Activated CD4-positive, alpha-beta memory T cell treated with anti-CD3 and anti-CD28 coated beads for 36 hours (primary cell): ENCODE measurements at regions of chr2 and their contacts with region 1.

Region 1: DNA sequence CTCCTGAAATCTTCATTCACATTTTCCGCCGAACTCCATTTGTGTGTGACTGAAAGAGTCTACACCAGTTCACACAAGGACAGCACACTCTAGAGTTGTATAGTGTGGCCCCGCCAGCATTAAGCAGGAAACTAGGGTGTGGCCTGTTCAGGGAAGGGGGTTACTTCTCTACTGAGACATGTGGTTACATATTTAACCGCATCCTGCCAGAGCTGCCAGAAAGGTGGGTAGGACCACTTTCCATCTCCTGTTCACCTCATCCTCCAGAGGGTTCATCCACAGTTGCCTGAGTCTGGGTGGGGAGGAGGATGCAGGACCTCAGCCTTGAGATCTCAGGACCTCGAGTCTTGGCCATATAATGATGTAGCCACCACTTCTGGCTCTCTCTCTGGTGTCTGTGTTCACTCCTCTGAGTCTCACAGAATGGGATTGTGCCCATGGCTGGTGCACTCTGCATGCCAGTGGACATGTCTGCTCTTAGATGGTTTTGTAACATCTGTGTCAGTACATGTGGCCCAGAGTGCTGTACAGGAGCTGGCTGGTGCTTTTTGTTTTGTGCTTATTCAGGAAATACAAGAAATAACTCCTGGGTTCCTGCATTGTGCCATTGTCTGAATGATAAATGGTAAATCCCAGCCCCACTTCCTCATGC is 7.7 kb upstream of the SP140L start:
- DNase-seq: peak; percentile 83
- H3K4me3 Mint-ChIP-seq: peak overlapping the region; percentile 6
- H3K27ac Mint-ChIP-seq: peak overlapping the region; percentile 80
- H3K4me1 Mint-ChIP-seq: peaks cover 60% of the 10 kb centered on the region
- H3K27me3 Mint-ChIP-seq: no peaks in the 10 kb centered on the region

Region 2: GRCh38 chr2:230219419-230220331 is 99.7 kb before region 1 on chr2 and contains the start of gene SP110:
- CTCF ChIA-PET with region 1: no interaction called
- POLR2A ChIA-PET with region 1: no interaction called
- intact Hi-C with region 1: loop called (anchors 2 kb)
- DNase-seq: peak; percentile 90
- H3K4me3 Mint-ChIP-seq: peak within 1 kb of the TSS; percentile 92
- H3K27ac Mint-ChIP-seq: peak within 1 kb of the TSS; percentile 90
- H3K4me1 Mint-ChIP-seq: peaks cover 69% of the 10 kb centered on the region
- H3K27me3 Mint-ChIP-seq: no peaks in the 10 kb centered on the region
- total RNA-seq, gene SP110: 91.5 to 94.1 TPM

Region 3: DNA sequence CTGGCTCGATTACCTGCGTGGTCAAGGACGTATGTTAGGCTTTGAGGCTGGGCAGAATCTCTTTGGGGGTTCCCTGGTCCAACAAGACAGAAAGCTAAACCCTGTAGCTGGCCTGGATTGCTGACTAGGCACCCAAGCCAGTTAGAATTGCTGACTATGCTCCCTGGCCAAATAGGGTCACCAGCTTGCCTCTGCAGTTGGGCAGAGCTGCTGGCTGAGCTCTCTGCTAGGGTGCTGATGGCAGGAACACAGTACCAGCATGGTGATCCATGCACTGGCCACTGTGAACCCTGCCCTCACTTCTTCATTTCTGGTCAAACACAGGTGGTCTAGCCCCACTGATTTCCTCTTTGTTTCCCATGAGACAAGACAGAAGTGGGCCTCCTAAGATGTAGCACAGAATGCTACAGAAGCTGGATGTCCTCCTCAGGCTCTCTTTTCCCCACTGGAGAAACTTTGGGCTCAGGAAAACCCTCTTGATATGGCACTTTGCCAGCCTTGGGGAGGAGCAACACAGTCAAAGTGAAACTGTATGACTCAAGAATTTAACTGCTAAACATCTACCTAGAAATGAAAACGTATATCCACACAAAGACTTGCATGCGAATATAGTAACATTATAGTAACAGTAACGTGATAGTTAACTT is 28.4 kb after region 1 on chr2:
- CTCF ChIA-PET with region 1: interaction called, 3 read pairs
- POLR2A ChIA-PET with region 1: no interaction called
- intact Hi-C with region 1: loop called (anchors 1 kb)
- DNase-seq: peak; percentile 70
- H3K4me3 Mint-ChIP-seq: peak overlapping the region; percentile 47
- H3K27ac Mint-ChIP-seq: peak overlapping the region; percentile 92
- H3K4me1 Mint-ChIP-seq: peaks cover 80% of the 10 kb centered on the region
- H3K27me3 Mint-ChIP-seq: no peaks in the 10 kb centered on the region

Region 4: DNA sequence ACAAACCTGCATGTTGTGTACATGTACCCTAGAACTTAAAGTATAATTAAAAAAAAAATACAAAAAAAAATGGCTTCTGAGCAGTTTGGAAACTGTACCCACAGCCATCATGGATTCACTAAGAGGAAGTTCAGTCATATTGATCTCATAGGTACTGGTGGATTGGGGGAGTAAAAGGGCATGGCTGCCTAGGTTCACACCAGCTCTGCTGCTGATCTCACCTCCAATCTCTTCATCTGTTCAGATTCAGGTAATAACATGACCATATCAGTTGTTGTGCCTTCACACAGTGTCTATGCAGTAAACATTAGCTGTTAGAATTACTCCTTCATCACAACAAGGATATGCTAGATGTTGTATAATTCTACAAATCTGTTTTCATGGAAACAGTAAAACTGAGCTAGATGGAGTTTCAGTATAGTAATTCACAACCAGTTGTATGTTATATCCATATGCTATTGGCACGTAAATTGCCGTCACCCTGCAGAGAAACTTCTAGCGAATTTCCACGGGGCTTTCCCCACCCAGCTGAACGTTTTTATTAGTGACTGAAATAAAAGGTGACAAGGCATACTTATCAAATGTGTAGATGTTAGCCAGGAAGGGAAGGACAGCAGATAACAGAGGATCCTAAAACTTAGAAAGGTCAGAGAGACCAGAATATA is 486.1 kb after region 1 on chr2:
- CTCF ChIA-PET with region 1: no interaction called
- POLR2A ChIA-PET with region 1: no interaction called
- intact Hi-C with region 1: no loop called
- DNase-seq: peak; percentile 71
- H3K4me3 Mint-ChIP-seq: no peak overlapping the region
- H3K27ac Mint-ChIP-seq: peak overlapping the region; percentile 73
- H3K4me1 Mint-ChIP-seq: peaks cover 29% of the 10 kb centered on the region
- H3K27me3 Mint-ChIP-seq: no peaks in the 10 kb centered on the region